MCF 10A (cell line): ENCODE measurements at regions of chr4 and their contacts with region 1.

Region 1: GRCh38 chr4:156999175-156999516 is 27.5 kb upstream of the PDGFC start:
- DNase-seq: peak; percentile 99
- H3K4me3 Mint-ChIP-seq: peak overlapping the region; percentile 29
- H3K27ac Mint-ChIP-seq: peak overlapping the region; percentile 29
- H3K4me1 Mint-ChIP-seq: peaks cover 48% of the 10 kb centered on the region
- H3K27me3 Mint-ChIP-seq: no peaks in the 10 kb centered on the region
- CTCF ChIP-seq: no peak

Region 2: DNA sequence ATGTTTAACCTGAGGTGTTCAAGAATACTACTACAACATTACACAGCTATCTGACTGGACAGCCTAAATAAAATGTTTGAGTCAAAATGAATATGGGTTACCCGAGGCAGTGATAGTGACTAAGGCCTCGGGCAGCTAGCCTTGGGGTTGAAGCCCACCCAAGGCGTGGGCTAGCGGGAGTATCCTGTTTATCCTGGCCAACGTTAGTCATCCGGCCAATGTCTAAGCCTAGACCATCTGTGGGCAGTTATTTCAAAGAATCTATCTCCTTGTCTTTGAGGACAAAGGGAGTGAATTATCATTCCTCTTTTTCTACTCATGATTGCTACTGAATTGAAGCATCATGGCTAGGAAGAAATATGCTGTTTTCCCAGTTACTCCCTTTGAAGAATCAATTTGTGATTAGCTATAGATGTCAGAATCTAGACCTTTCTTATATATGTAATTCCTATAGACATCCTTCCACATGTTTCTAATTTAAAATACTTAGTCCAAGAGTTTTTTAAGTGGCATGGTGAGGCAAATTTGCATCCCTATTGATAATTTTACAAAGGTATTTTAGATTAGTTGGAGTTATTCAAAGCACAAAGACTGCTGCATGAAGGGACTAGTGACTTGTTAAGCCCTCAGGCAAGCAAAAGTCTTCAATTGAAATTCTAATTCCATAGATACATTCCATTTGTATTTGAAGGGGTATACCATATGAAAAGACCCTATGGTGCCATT is 21.5 kb before region 1 on chr4:
- CTCF ChIA-PET with region 1: interaction called, 12 read pairs
- POLR2A ChIA-PET with region 1: interaction called, 7 read pairs
- intact Hi-C with region 1: loop called (anchors 2 kb)
- DNase-seq: no peak
- H3K4me3 Mint-ChIP-seq: no peak overlapping the region
- H3K27ac Mint-ChIP-seq: peak overlapping the region; percentile 95
- H3K4me1 Mint-ChIP-seq: peaks cover 47% of the 10 kb centered on the region
- H3K27me3 Mint-ChIP-seq: no peaks in the 10 kb centered on the region
- CTCF ChIP-seq: no peak

Region 3: GRCh38 chr4:157104541-157104940 is 105.4 kb after region 1 on chr4:
- CTCF ChIA-PET with region 1: no interaction called
- POLR2A ChIA-PET with region 1: no interaction called
- intact Hi-C with region 1: no loop called
- DNase-seq: no peak
- H3K4me3 Mint-ChIP-seq: no peak overlapping the region
- H3K27ac Mint-ChIP-seq: no peak overlapping the region
- H3K4me1 Mint-ChIP-seq: no peaks in the 10 kb centered on the region
- H3K27me3 Mint-ChIP-seq: no peaks in the 10 kb centered on the region
- CTCF ChIP-seq: no peak